ENCODE measurements at regions of chrX and their contacts with region 1.

Region 1: DNA sequence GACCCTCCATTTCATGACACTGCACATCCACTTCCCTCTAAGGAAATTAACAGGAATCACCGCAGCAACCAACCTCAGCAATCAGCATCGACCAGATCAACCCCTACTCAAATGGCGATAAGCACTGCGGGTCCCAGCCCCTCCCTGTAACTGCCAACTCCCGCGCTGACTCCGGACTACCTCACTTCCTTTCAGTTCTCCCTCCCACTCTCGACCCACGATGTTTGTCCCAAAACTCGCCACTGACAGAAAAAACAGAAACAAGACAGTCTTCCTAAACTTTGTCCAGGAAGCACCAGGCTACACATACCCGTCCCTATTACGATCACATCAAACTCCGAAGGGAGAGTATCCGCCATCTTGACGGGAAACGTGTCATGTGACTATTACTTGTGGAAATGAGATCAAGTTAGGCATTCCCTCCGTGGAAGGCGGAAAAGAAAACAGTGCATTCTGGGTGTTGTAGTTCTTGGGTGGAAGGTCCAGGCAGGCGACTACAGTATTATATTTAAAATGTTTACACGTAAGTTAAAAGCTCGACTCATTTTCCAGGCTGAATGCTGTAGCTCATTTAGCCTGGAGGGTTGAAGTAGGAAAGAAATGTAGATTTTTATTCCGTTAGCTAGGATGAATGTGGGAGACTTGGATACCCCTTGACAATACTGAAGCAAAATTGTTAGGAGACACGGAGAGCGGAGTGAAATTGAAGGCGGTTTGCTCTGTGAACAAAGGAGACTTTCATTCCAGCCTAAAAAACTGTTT is at the start of gene CHM:
- DNase-seq: peak; percentile 55
- H3K4me3 Mint-ChIP-seq: no peak within 1 kb of the TSS
- H3K27ac Mint-ChIP-seq: no peak within 1 kb of the TSS
- H3K4me1 Mint-ChIP-seq: no peaks in the 10 kb centered on the region
- H3K27me3 Mint-ChIP-seq: no peaks in the 10 kb centered on the region
- total RNA-seq, gene CHM: 15.6 and 15.7 TPM in 2 replicates

Region 2: GRCh38 chrX:85003655-85004244 is 1043.6 kb before region 1 on chrX and contains the start of gene APOOL:
- intact Hi-C with region 1: loop called (anchors 1 kb)
- DNase-seq: peak; percentile 66
- H3K4me3 Mint-ChIP-seq: peak within 1 kb of the TSS; percentile 90
- H3K27ac Mint-ChIP-seq: peak within 1 kb of the TSS; percentile 65
- H3K4me1 Mint-ChIP-seq: peaks cover 4% of the 10 kb centered on the region
- H3K27me3 Mint-ChIP-seq: peaks cover 2% of the 10 kb centered on the region
- total RNA-seq, gene APOOL: 16.3 and 18.2 TPM in 2 replicates

Region 3: DNA sequence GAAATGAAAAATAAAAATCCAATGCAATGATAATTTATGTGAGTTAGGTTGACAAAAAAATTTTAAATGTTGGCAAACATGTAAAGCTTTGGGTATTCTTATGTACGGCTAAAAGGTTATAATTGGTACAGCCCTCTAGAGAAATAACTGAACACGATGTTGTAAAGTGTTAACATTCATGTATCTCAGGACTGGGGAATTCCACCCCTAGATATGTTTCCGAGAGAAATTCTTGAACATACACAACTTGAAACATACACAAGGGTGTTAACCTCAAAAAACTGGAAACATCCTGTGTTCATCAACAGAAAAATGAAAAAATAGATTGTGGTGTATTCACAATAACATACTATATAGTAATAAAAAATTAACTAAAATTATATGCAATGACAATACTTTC is 91.8 kb before region 1 on chrX:
- intact Hi-C with region 1: loop called (anchors 5 kb)
- DNase-seq: no peak
- H3K4me3 Mint-ChIP-seq: no peak overlapping the region
- H3K27ac Mint-ChIP-seq: no peak overlapping the region
- H3K4me1 Mint-ChIP-seq: no peaks in the 10 kb centered on the region
- H3K27me3 Mint-ChIP-seq: no peaks in the 10 kb centered on the region

Measured in activated T-helper 1 cell treated with anti-CD3 and anti-CD28 coated beads, Interleukin-12 subunit alpha, Interleukin-12 subunit beta, Interleukin-2, Interleukin-4 antibody, amounts not matched to agents 30 ng/mL and 10 ng/mL and 1 ng/mL, durations not matched to agents 14 hours and 24 hours and 36 hours (primary cell).